Activated naive CD4-positive, alpha-beta T cell treated with anti-CD3 and anti-CD28 coated beads for 36 hours (primary cell): ENCODE measurements at regions of chr1 and their contacts with region 1.

Region 1: DNA sequence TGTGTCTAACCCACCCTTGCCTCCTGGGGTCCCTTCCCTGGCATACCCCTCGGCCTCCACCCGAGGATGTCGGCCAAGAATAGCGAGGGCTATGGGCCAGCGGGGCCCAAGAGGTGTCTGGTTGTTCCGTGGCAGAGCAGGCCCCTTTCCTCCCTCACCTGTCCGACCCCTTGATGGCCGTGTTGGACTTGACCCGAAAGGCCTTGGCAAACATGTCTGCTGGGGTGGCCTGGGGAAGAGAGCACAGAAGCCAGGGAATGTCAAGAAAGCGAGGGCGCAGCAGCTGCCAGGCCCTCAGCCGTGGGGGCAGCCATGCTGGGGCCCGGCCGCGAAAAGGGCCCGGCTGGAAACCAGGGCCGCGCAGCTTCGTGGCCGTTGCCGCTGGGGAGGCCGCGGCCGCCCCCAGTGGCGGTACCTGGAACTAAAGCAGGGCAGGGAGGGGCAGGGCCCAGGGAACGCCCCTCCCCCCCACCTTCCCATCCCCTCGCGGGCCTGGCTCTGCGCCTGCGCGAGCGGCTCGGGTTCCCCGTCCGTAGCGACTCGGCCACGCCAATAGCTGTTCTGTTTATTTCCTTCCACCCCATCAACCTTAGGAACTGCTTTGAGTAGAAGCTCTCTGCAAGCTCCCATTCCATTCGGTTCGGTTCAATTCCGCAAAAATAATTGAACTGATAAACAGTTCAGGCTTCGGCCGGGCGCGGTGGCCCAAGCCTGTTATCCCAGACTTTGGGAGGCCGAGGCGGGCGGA is at the start of gene EIF2D:
- DNase-seq: peak; percentile 95
- H3K4me3 Mint-ChIP-seq: peak within 1 kb of the TSS; percentile 92
- H3K27ac Mint-ChIP-seq: peak within 1 kb of the TSS; percentile 99
- H3K4me1 Mint-ChIP-seq: peaks cover 44% of the 10 kb centered on the region
- H3K27me3 Mint-ChIP-seq: no peaks in the 10 kb centered on the region
- total RNA-seq, gene EIF2D: 116 to 122 TPM

Region 2: DNA sequence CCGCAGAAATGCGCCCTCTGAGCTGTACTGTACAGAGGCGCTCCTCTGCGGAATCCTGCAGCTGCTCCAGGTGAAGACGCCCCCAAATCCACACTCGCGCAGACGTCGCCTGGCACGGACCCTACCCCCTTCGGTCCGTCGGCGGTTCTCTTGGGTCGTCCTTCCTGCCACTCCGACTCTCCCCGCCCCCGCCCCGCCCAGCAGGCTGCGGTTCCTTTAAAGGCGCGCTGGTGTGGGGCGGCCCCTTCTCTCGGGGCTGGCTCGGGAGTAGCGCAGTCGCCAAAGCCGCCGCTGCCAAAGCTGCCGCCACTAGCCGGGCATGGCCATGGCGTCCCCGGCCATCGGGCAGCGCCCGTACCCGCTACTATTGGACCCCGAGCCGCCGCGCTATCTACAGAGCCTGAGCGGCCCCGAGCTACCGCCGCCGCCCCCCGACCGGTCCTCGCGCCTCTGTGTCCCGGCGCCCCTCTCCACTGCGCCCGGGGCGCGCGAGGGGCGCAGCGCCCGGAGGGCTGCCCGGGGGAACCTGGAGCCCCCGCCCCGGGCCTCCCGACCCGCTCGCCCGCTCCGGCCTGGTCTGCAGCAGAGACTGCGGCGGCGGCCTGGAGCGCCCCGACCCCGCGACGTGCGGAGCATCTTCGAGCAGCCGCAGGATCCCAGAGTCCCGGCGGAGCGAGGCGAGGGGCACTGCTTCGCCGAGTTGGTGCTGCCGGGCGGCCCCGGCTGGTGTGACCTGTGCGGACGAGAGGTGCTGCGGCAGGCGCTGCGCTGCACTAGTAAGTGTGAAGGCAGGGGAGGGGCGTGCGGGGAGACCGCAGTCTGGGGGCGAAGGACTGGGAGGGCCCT is 104.8 kb before region 1 on chr1 and contains the start of gene RASSF5:
- CTCF ChIA-PET with region 1: interaction called, 8 read pairs
- intact Hi-C with region 1: loop called (anchors 1 kb)
- DNase-seq: peak; percentile 92
- H3K4me3 Mint-ChIP-seq: peak within 1 kb of the TSS; percentile 74
- H3K27ac Mint-ChIP-seq: peak within 1 kb of the TSS; percentile 55
- H3K4me1 Mint-ChIP-seq: peaks cover 45% of the 10 kb centered on the region
- H3K27me3 Mint-ChIP-seq: peaks cover 22% of the 10 kb centered on the region
- total RNA-seq, gene RASSF5: 257 to 258 TPM

Region 3: GRCh38 chr1:206529425-206529824 is 82.9 kb before region 1 on chr1:
- CTCF ChIA-PET with region 1: no interaction called
- intact Hi-C with region 1: no loop called
- DNase-seq: no peak
- H3K4me3 Mint-ChIP-seq: no peak overlapping the region
- H3K27ac Mint-ChIP-seq: no peak overlapping the region
- H3K4me1 Mint-ChIP-seq: no peaks in the 10 kb centered on the region
- H3K27me3 Mint-ChIP-seq: no peaks in the 10 kb centered on the region

Region 4: DNA sequence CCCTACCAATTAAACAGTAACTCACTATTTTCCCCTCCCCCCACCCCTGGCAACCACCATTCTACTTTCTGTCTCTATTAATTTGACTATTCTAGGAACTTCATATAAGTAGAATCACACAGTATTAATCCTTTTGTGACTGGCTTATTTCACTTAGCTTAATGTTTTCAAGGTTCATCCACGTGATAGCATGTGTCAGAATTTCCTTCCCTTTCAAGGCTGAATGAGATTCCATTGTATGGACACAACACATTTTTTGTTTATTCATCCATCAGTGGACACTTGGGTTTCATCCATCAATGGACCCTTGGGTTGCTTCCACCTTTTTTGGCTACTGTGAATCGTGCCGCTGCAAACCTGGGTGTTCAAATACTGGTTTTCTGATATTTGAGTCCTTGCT is 41.8 kb before region 1 on chr1:
- CTCF ChIA-PET with region 1: no interaction called
- intact Hi-C with region 1: no loop called
- DNase-seq: no peak
- H3K4me3 Mint-ChIP-seq: peak overlapping the region; percentile 50
- H3K27ac Mint-ChIP-seq: peak overlapping the region; percentile 100
- H3K4me1 Mint-ChIP-seq: peaks cover 97% of the 10 kb centered on the region
- H3K27me3 Mint-ChIP-seq: no peaks in the 10 kb centered on the region

Region 5: DNA sequence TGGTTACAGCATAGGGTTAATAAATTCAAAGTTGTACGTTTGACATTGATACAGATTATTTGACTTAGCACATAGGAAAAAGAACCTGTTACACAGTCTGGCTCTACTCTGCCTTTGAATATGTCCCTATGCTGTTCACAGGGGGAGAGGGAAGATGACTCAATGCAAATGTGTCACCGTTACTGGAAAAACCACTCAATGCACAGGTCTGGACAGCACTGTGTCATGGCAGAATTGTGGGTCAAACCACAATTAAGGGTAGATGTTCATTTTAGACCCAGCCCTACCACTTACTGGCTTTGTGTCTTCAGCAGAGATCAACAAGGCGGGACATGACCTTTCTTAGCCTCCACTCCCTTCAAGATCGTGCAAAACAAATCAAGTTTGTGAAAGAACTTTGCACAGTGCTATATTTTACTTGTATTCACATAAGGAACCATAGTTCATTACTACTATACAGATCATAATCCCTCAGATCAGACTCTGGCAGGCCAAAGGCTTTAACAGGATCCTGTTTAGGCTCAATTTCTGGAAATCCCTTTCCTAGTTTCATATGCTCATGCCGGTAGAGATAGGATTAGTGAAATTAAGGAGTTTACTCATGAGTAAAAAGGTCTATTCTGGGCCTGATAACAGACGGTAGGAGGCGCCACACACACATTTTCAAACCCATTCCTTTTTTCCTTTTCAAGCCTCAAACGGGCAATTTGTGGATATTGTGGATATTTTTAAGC is 22.1 kb before region 1 on chr1:
- CTCF ChIA-PET with region 1: interaction called, 53 read pairs
- intact Hi-C with region 1: loop called (anchors 1 kb)
- DNase-seq: peak; percentile 89
- H3K4me3 Mint-ChIP-seq: peak overlapping the region; percentile 52
- H3K27ac Mint-ChIP-seq: peak overlapping the region; percentile 100
- H3K4me1 Mint-ChIP-seq: peaks cover 72% of the 10 kb centered on the region
- H3K27me3 Mint-ChIP-seq: no peaks in the 10 kb centered on the region

Region 6: DNA sequence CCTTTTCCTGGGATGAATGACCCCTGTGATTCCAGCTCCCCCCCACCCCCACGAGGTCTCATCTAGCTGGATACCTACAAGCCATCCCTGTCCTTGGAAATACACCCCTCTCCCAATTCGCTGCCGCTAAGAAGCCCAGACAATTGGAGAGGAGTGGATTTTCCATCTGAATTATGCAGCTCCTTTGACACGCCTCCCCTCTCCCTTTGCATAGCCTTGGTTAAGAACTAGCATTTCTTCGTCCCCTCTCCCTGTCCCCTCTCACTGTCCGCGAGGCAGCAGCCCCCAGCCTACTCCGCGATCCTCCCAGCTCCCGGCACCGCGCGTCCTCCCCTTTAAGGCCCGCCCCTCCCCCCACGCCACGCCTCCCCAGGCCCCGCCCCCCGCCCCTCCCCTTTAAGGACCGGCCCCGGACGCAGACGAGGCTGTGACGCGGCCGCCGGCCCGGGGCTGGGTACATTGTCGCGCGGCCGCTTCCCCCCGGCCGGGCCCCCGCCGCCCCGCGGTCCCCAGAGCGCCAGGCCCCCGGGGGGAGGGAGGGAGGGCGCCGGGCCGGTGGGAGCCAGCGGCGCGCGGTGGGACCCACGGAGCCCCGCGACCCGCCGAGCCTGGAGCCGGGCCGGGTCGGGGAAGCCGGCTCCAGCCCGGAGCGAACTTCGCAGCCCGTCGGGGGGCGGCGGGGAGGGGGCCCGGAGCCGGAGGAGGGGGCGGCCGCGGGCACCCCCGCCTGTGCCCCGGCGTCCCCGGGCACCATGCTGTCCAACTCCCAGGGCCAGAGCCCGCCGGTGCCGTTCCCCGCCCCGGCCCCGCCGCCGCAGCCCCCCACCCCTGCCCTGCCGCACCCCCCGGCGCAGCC is 72.4 kb after region 1 on chr1 and contains the start of gene MAPKAPK2:
- CTCF ChIA-PET with region 1: no interaction called
- intact Hi-C with region 1: loop called (anchors 2 kb)
- DNase-seq: peak; percentile 75
- H3K4me3 Mint-ChIP-seq: peak within 1 kb of the TSS; percentile 88
- H3K27ac Mint-ChIP-seq: peak within 1 kb of the TSS; percentile 91
- H3K4me1 Mint-ChIP-seq: peaks cover 52% of the 10 kb centered on the region
- H3K27me3 Mint-ChIP-seq: peaks cover 2% of the 10 kb centered on the region
- total RNA-seq, gene MAPKAPK2: 83.4 to 85.3 TPM